ENCODE measurements at regions of chr17 and their contacts with region 1.

Region 1: GRCh38 chr17:82153745-82154375 is 55.8 kb upstream of the FASN start:
- DNase-seq: peak; percentile 84 to 89 (median 88)
- ATAC-seq: peak; percentile 88 to 94 (median 92)
- H3K4me3 ChIP-seq: no peak overlapping the region
- H3K27ac ChIP-seq: no peak overlapping the region
- H3K4me1 ChIP-seq: peaks cover 0 to 26% (median 12%) of the 10 kb centered on the region in 4 donors
- H3K27me3 ChIP-seq: no peaks in the 10 kb centered on the region
- CTCF ChIP-seq: peak; percentile 80 to 98 (median 96)
- POLR2A ChIP-seq: no peak

Region 2: DNA sequence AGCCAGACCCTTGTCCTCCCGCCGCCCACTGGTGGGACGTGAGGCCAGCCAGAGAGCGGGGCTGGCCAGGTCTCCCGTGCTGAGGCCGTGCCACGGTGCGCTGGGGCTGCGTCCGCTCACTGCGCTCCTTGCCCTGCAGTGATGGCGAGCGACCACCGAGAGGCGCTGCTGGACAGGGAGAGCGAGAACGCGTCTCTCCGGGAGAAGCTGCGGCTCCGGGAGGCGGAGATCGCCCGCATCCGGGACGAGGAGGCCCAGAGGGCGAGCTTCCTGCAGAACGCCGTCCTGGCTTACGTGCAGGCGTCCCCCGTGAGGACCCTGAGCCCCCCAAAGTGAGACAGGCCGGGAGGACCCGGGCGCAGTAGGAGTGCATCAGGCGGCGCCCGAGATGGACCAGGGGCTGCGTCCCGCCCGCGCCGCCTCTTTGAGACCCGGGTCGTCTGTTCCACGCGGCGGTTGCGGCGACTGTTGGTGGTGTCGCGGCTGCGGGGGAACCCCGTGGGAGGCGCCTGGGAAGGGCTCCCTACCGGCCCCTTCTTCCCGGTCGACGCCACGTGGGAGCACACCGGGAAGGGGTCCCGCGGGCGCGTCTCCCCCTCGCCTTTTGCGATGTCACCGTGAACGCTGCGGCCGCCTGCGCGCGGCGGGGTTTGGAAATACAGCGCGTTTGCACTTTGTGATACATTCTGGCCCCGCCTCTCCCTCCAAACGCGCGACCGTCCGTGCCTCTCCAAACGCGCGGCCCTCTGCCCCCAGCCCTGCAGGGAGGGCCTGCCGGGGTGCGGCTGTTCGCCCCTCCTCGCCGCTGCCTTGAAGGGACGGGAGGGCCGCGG is 123.2 kb before region 1 on chr17:
- intact Hi-C with region 1: loop called (anchors 2 to 5 kb)
- DNase-seq: peak; percentile 91 to 92 (median 92)
- ATAC-seq: peak; percentile 72 to 79 (median 78)
- H3K4me3 ChIP-seq: peak overlapping the region; percentile 44 to 60 (median 46)
- H3K27ac ChIP-seq: peak overlapping the region; percentile 16 to 65 (median 49)
- H3K4me1 ChIP-seq: peaks cover 0 to 33% (median 16%) of the 10 kb centered on the region in 4 donors
- H3K27me3 ChIP-seq: no peaks in the 10 kb centered on the region
- CTCF ChIP-seq: peak; percentile 90 to 99 (median 98)
- POLR2A ChIP-seq: peak; percentile 26

Region 3: DNA sequence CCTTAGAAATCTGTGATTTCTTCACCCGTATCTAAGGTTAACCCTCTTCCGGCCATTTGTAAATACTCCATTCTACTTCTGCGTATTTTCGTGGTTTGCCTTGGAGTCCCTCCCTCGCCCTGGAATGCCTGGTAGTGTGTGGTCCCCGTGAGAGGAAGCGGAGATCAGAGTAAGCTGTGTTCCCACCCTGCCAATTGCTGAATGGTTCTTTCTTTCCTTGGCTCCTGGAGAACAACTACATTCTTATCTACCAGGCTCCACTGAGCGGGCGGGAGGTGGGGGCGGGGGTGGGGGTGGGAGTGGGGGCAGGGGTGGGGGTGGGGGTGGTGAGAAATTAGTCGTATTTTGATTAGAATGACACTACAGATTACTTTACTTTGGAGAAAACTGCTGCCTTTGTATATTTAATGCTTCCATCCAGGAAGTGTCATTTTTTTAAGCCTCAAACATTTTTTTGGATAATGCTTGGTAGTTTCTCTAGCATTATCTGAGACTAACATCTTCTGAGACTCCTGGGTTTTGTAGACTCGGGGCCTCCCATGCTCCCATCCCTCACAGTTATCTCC is 35.0 kb before region 1 on chr17:
- intact Hi-C with region 1: loop called in 1 of 2 experiments (anchors 5 kb)
- DNase-seq: no peak
- ATAC-seq: no peak
- H3K4me3 ChIP-seq: no peak overlapping the region
- H3K27ac ChIP-seq: peak overlapping the region in 2 of 3 donors; percentile 83 to 89
- H3K4me1 ChIP-seq: peaks cover 0 to 35% (median 14%) of the 10 kb centered on the region in 4 donors
- H3K27me3 ChIP-seq: no peaks in the 10 kb centered on the region
- CTCF ChIP-seq: no peak
- POLR2A ChIP-seq: no peak

Measured in right lobe of liver (tissue), 6 donors.